HepG2 (cell line): ENCODE measurements at regions of chr5 and their contacts with region 1.

Region 1: GRCh38 chr5:149175346-149176105 is 34.2 kb downstream of the ABLIM3 start:
- DNase-seq: no peak
- ATAC-seq: no peak
- H3K4me3 ChIP-seq: no peak overlapping the region
- H3K27ac ChIP-seq: peak overlapping the region; percentile 100
- H3K4me1 ChIP-seq: peaks cover 63% of the 10 kb centered on the region
- H3K27me3 ChIP-seq: no peaks in the 10 kb centered on the region
- CTCF ChIP-seq: no peak
- EP300 ChIP-seq: no peak
- POLR2A ChIP-seq: no peak
- RAD21 ChIP-seq: no peak

Region 2: DNA sequence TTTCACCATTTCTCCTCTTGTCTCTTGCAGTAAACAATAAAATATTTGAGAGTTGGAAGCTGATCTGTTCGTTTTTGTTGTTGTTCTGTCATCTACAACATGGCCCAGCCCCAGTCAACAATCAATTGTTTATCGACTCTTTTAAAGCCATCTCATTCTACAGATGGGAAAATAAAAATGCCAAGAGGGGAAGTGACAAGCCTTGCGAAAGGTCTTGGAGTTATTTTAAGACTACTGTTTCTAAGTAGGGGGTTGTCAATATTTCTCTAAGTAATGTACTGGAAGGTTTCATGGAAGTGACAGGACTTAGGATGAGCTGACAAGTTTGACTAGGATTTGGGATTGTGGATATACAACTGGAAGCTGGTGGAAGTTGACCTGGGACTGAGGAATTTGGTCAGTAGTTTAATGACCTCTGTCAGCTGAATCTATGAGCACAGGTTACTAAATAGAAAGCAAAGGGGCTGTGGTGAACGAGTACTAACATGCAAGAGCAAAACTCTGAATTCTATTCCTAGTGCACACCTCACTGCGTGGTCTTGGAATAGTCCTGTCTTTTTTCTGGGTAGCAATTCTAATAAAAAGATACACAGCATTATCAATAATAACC is 406.6 kb before region 1 on chr5:
- CTCF ChIA-PET with region 1: no interaction called
- POLR2A ChIA-PET with region 1: no interaction called
- in situ Hi-C with region 1: no loop called
- intact Hi-C with region 1: no loop called
- DNase-seq: no peak
- ATAC-seq: no peak
- H3K4me3 ChIP-seq: no peak overlapping the region
- H3K27ac ChIP-seq: no peak overlapping the region
- H3K4me1 ChIP-seq: no peaks in the 10 kb centered on the region
- H3K27me3 ChIP-seq: no peaks in the 10 kb centered on the region; a peak in 1 of 5 replicates
- CTCF ChIP-seq: no peak
- EP300 ChIP-seq: no peak
- POLR2A ChIP-seq: no peak
- RAD21 ChIP-seq: no peak

Region 3: DNA sequence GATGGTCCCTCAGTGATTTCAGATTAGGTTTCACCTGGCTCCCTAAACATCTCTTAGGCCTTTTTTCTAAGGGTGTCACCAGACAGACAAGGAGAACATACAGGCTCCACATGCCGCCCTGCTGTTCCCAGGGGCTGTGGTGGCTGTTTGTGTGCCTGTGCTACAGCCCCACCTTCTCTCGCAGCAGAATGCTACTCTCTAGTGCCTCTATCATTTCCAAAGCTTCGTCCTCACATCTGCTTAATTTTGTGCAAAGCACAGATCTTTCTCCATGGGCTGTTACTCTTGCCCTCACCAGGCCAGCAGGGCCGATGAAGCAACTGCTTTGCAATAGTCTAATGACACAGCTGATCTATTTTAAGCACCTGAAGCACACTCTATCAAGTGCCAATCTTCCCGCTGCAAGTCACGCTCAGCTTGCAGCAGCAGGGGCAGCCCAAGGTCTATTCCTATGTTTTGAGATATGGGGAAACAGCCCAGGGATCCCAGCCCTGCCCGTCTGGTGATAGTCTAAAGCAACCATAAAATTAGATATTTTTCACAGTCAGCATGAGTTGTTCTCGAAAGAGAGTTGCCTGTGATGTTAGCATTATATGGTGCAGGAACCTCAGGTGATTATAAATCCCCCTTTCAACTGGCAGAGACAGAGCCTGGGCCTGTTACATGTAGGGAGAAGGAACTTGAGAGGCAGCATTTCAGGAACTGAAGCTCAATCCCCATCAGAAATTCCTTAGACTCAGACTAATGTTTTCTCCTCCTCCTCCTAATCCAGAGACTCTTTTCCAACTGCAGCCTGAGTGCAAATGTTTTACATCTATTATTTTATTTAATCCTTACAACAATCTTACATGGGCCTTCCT is 21.5 kb before region 1 on chr5:
- CTCF ChIA-PET with region 1: no interaction called
- POLR2A ChIA-PET with region 1: interaction called, 89 read pairs
- in situ Hi-C with region 1: no loop called
- intact Hi-C with region 1: no loop called
- DNase-seq: peak; percentile 50
- ATAC-seq: peak; percentile 10; the same call in 1 of the 3 replicates
- H3K4me3 ChIP-seq: no peak overlapping the region
- H3K27ac ChIP-seq: peak overlapping the region; percentile 84
- H3K4me1 ChIP-seq: peaks cover 84% of the 10 kb centered on the region
- H3K27me3 ChIP-seq: no peaks in the 10 kb centered on the region
- CTCF ChIP-seq: no peak
- EP300 ChIP-seq: no peak
- POLR2A ChIP-seq: no peak
- RAD21 ChIP-seq: no peak

Region 4: GRCh38 chr5:149162401-149163084 is 13.0 kb before region 1 on chr5:
- CTCF ChIA-PET with region 1: no interaction called
- POLR2A ChIA-PET with region 1: interaction called, 189 read pairs
- in situ Hi-C with region 1: no loop called
- intact Hi-C with region 1: loop called (anchors 1 kb)
- DNase-seq: peak; percentile 75
- ATAC-seq: peak; percentile 31; the same call in 2 of the 3 replicates
- H3K4me3 ChIP-seq: peak overlapping the region in 1 of 3 experiments; percentile 70; a peak in 2 of 6 replicates
- H3K27ac ChIP-seq: peak overlapping the region; percentile 87
- H3K4me1 ChIP-seq: peaks cover 64% of the 10 kb centered on the region
- H3K27me3 ChIP-seq: no peaks in the 10 kb centered on the region
- CTCF ChIP-seq: no peak
- EP300 ChIP-seq: peak in 1 of 2 experiments; percentile 19; a peak in 1 of 4 replicates
- POLR2A ChIP-seq: no peak
- RAD21 ChIP-seq: no peak

Region 5: GRCh38 chr5:149195337-149195887 is 19.9 kb after region 1 on chr5:
- CTCF ChIA-PET with region 1: no interaction called
- POLR2A ChIA-PET with region 1: interaction called, 3 read pairs
- in situ Hi-C with region 1: no loop called
- intact Hi-C with region 1: loop called (anchors 2 kb)
- DNase-seq: no peak
- ATAC-seq: no peak
- H3K4me3 ChIP-seq: no peak overlapping the region
- H3K27ac ChIP-seq: no peak overlapping the region
- H3K4me1 ChIP-seq: peaks cover 13% of the 10 kb centered on the region
- H3K27me3 ChIP-seq: no peaks in the 10 kb centered on the region
- CTCF ChIP-seq: no peak
- EP300 ChIP-seq: no peak
- POLR2A ChIP-seq: no peak
- RAD21 ChIP-seq: no peak

Region 6: GRCh38 chr5:149221326-149221725 is 45.8 kb after region 1 on chr5:
- CTCF ChIA-PET with region 1: no interaction called
- POLR2A ChIA-PET with region 1: interaction called, 15 read pairs
- in situ Hi-C with region 1: no loop called
- intact Hi-C with region 1: loop called (anchors 2 kb)
- DNase-seq: peak; percentile 18
- ATAC-seq: peak; percentile 59
- H3K4me3 ChIP-seq: no peak overlapping the region; a peak in 1 of 6 replicates
- H3K27ac ChIP-seq: peak overlapping the region; percentile 51
- H3K4me1 ChIP-seq: peaks cover 30% of the 10 kb centered on the region
- H3K27me3 ChIP-seq: no peaks in the 10 kb centered on the region
- CTCF ChIP-seq: no peak
- EP300 ChIP-seq: no peak
- POLR2A ChIP-seq: no peak
- RAD21 ChIP-seq: no peak